BJ (cell line): ENCODE measurements at regions of chr12 and their contacts with region 1.

Region 1: GRCh38 chr12:109775172-109775881 is 57.9 kb downstream of the TRPV4 start:
- DNase-seq: no peak
- H3K4me3 ChIP-seq: no peak overlapping the region
- H3K27me3 ChIP-seq: peaks cover 4% of the 10 kb centered on the region
- CTCF ChIP-seq: peak; percentile 93

Region 2: GRCh38 chr12:109518820-109519665 is 256.3 kb before region 1 on chr12:
- CTCF ChIA-PET with region 1: interaction called, 77 read pairs
- POLR2A ChIA-PET with region 1: no interaction called
- DNase-seq: peak; percentile 26
- H3K4me3 ChIP-seq: no peak overlapping the region
- H3K27me3 ChIP-seq: no peaks in the 10 kb centered on the region
- CTCF ChIP-seq: peak; percentile 89

Region 3: DNA sequence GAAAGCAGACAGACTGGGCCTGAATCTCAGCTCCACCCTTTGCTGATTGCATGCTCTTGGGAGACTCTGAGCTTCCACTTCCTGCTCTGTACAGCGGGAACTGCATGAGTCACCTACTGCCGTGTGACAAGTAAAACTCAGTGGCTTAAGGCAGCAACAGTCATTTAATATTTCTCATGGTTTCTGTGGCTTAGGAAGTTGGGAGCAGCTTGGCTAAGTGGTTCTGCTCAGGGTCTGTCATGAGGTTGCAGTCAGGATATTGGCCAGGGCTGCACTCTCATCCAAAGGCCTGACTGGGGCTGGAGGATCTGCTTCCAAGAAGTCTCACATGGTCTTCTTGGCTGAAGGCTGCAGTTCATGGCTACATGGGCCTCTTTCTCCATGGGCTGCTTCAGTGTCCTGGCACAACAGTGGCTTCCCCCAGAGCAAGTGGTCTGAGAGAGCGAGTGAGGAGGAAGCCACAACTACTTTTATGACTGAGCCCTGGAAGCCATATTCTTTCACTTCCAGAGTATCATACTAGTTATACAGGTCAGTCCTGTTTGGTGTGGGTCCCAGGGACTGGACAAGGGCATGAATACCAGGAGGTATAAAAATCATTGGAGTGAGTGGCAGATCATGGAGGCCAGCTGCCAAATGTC is 12.0 kb before region 1 on chr12:
- CTCF ChIA-PET with region 1: interaction called, 12 read pairs
- POLR2A ChIA-PET with region 1: no interaction called
- DNase-seq: no peak
- H3K4me3 ChIP-seq: no peak overlapping the region
- H3K27me3 ChIP-seq: peaks cover 2% of the 10 kb centered on the region; the same call in 1 of the 2 replicates
- CTCF ChIP-seq: no peak

Region 4: DNA sequence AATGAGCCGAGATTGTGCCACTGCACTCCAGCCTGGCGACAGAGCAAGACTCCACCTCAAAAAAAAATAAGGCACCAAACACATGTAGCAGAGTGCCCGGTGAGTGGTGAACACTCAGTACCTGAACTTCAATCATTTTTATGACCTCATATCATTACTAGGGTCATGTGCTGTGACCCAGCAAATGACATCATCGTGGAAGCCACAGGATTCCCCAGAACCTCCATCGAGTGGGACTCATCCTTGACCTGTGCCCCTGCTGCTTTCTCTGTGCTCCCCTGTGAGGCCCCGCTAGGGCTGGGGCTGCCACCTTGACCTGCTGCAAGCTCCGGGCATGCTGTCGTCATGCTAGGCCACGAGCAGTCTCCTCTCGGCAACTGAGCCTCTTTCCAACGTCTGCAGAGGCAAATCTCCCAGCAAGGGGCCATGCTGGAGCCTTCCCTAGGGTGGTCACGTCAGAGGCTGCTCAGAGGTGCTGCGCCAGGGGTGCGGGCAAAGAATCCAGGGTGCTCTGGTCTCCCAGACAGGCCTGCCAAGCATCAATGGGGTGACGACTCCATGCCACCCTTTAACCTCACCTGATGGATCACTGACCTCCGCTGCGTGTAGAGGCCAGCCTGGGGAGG is 86.5 kb after region 1 on chr12:
- CTCF ChIA-PET with region 1: no interaction called
- POLR2A ChIA-PET with region 1: no interaction called
- DNase-seq: no peak
- H3K4me3 ChIP-seq: no peak overlapping the region
- H3K27me3 ChIP-seq: no peaks in the 10 kb centered on the region
- CTCF ChIP-seq: no peak